CD4-positive, alpha-beta T cell (primary cell): ENCODE measurements at regions of chr10 and their contacts with region 1.

Region 1: GRCh38 chr10:73167783-73168464 is at the starts of genes ECD and FAM149B1:
- DNase-seq: peak; percentile 79 to 96 (median 86)
- ATAC-seq: peak; percentile 92
- H3K4me3 ChIP-seq: peak within 1 kb of the TSS; percentile 90
- H3K4me3 Mint-ChIP-seq: peak within 1 kb of the TSS; percentile 94
- H3K27ac ChIP-seq: peak within 1 kb of the TSS; percentile 96 to 97
- H3K27ac Mint-ChIP-seq: peak within 1 kb of the TSS; percentile 98
- H3K4me1 ChIP-seq: peaks cover 13% of the 10 kb centered on the region
- H3K4me1 Mint-ChIP-seq: peaks cover 45% of the 10 kb centered on the region
- H3K27me3 ChIP-seq: no peaks in the 10 kb centered on the region
- H3K27me3 Mint-ChIP-seq: no peaks in the 10 kb centered on the region
- CTCF ChIP-seq: no peak
- total RNA-seq, gene ECD: 50.5 to 57.7 TPM
- total RNA-seq, gene FAM149B1: 7.0 to 7.7 TPM

Region 2: GRCh38 chr10:72206511-72207229 is 961.3 kb before region 1 on chr10:
- CTCF ChIA-PET with region 1: no interaction called
- POLR2A ChIA-PET with region 1: no interaction called
- intact Hi-C with region 1: no loop called
- DNase-seq: no peak
- ATAC-seq: no peak
- H3K4me3 ChIP-seq: no peak overlapping the region
- H3K4me3 Mint-ChIP-seq: no peak overlapping the region
- H3K27ac ChIP-seq: no peak overlapping the region
- H3K27ac Mint-ChIP-seq: no peak overlapping the region
- H3K4me1 ChIP-seq: peaks cover 14% of the 10 kb centered on the region
- H3K4me1 Mint-ChIP-seq: peaks cover 15% of the 10 kb centered on the region
- H3K27me3 ChIP-seq: no peaks in the 10 kb centered on the region
- H3K27me3 Mint-ChIP-seq: no peaks in the 10 kb centered on the region
- CTCF ChIP-seq: no peak

Region 3: GRCh38 chr10:72354478-72355213 is 813.3 kb before region 1 on chr10 and contains the start of gene DNAJB12:
- CTCF ChIA-PET with region 1: no interaction called
- POLR2A ChIA-PET with region 1: no interaction called
- intact Hi-C with region 1: loop called in 1 of 2 experiments (anchors 2 kb)
- DNase-seq: peak; percentile 78 to 96 (median 88)
- ATAC-seq: peak; percentile 86
- H3K4me3 ChIP-seq: peak within 1 kb of the TSS; percentile 95
- H3K4me3 Mint-ChIP-seq: peak within 1 kb of the TSS; percentile 99
- H3K27ac ChIP-seq: peak within 1 kb of the TSS; percentile 95 to 97
- H3K27ac Mint-ChIP-seq: peak within 1 kb of the TSS; percentile 92
- H3K4me1 ChIP-seq: peaks cover 28% of the 10 kb centered on the region
- H3K4me1 Mint-ChIP-seq: peaks cover 47% of the 10 kb centered on the region
- H3K27me3 ChIP-seq: no peaks in the 10 kb centered on the region
- H3K27me3 Mint-ChIP-seq: no peaks in the 10 kb centered on the region
- CTCF ChIP-seq: no peak
- total RNA-seq, gene DNAJB12: 25.2 to 27.0 TPM

Region 4: GRCh38 chr10:72692057-72692910 is 475.6 kb before region 1 on chr10 and contains the start of gene MCU:
- CTCF ChIA-PET with region 1: no interaction called
- POLR2A ChIA-PET with region 1: no interaction called
- intact Hi-C with region 1: loop called in 1 of 2 experiments (anchors 10 kb)
- DNase-seq: peak; percentile 86 to 96 (median 92)
- ATAC-seq: peak; percentile 96
- H3K4me3 ChIP-seq: peak within 1 kb of the TSS; percentile 79
- H3K4me3 Mint-ChIP-seq: peak within 1 kb of the TSS; percentile 91
- H3K27ac ChIP-seq: peak within 1 kb of the TSS in 1 of 2 donors; percentile 24
- H3K27ac Mint-ChIP-seq: peak within 1 kb of the TSS; percentile 41
- H3K4me1 ChIP-seq: peaks cover 10% of the 10 kb centered on the region
- H3K4me1 Mint-ChIP-seq: peaks cover 43% of the 10 kb centered on the region
- H3K27me3 ChIP-seq: no peaks in the 10 kb centered on the region
- H3K27me3 Mint-ChIP-seq: no peaks in the 10 kb centered on the region
- CTCF ChIP-seq: no peak
- total RNA-seq, gene MCU: 10.3 to 12.0 TPM

Region 5: GRCh38 chr10:73190188-73190587 is 22.3 kb after region 1 on chr10:
- CTCF ChIA-PET with region 1: no interaction called
- POLR2A ChIA-PET with region 1: interaction called, 3 read pairs
- intact Hi-C with region 1: loop called in 1 of 2 experiments (anchors 1 kb)
- DNase-seq: no peak
- ATAC-seq: no peak
- H3K4me3 ChIP-seq: no peak overlapping the region
- H3K4me3 Mint-ChIP-seq: no peak overlapping the region
- H3K27ac ChIP-seq: no peak overlapping the region
- H3K27ac Mint-ChIP-seq: no peak overlapping the region
- H3K4me1 ChIP-seq: no peaks in the 10 kb centered on the region
- H3K4me1 Mint-ChIP-seq: no peaks in the 10 kb centered on the region
- H3K27me3 ChIP-seq: no peaks in the 10 kb centered on the region
- H3K27me3 Mint-ChIP-seq: no peaks in the 10 kb centered on the region
- CTCF ChIP-seq: no peak

Region 6: DNA sequence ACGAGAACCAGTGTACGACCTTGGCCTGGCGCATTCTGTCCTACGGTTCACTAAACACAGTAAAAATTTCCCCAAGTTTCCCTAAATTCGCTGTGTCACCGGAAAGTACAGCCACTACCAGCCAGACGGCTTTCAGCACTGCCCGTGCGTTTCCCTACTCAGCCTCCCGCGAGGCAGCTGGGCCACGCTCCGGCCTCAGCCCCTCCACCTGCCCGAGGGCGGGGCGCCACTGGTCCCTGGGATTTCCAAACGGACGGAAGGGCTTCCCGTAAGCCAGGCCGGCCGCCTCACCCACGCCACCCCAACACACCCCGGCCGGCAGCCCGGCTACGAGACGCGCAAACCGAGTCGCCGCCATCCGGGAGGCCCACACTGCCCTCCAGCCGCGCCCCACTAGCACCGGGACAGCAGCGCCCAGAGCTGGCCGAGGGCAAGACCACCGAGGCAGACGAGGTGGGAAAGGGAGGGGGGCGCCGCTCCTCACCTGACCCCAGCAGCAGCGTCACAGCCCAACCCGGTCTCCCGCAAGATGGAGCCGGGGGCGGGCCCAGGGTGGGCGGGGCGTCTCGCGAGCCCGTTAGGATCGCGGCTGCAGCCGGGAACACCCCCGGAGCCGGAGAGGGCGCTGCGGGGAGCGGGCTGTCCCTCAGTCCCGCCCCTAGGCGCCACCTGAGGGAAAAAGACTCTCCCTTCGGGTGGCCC is 245.8 kb after region 1 on chr10 and contains the start of gene ANXA7:
- CTCF ChIA-PET with region 1: no interaction called
- POLR2A ChIA-PET with region 1: interaction called, 3 read pairs
- intact Hi-C with region 1: loop called in 1 of 2 experiments (anchors 5 kb)
- DNase-seq: peak; percentile 83 to 96 (median 92)
- ATAC-seq: peak; percentile 97
- H3K4me3 ChIP-seq: peak within 1 kb of the TSS; percentile 75
- H3K4me3 Mint-ChIP-seq: peak within 1 kb of the TSS; percentile 91
- H3K27ac ChIP-seq: peak within 1 kb of the TSS; percentile 86 to 98
- H3K27ac Mint-ChIP-seq: peak within 1 kb of the TSS; percentile 84
- H3K4me1 ChIP-seq: peaks cover 36% of the 10 kb centered on the region
- H3K4me1 Mint-ChIP-seq: peaks cover 57% of the 10 kb centered on the region
- H3K27me3 ChIP-seq: no peaks in the 10 kb centered on the region
- H3K27me3 Mint-ChIP-seq: no peaks in the 10 kb centered on the region
- CTCF ChIP-seq: peak; percentile 67
- total RNA-seq, gene ANXA7: 77.7 to 79.6 TPM

Region 7: GRCh38 chr10:75111367-75111906 is 1943.5 kb after region 1 on chr10 and contains the start of gene SAMD8:
- CTCF ChIA-PET with region 1: no interaction called
- POLR2A ChIA-PET with region 1: no interaction called
- intact Hi-C with region 1: loop called in 1 of 2 experiments (anchors 5 kb)
- DNase-seq: peak; percentile 90 to 99 (median 94)
- ATAC-seq: peak; percentile 80
- H3K4me3 ChIP-seq: peak within 1 kb of the TSS; percentile 97
- H3K4me3 Mint-ChIP-seq: peak within 1 kb of the TSS; percentile 88
- H3K27ac ChIP-seq: peak within 1 kb of the TSS; percentile 92 to 95
- H3K27ac Mint-ChIP-seq: peak within 1 kb of the TSS; percentile 90
- H3K4me1 ChIP-seq: peaks cover 26% of the 10 kb centered on the region
- H3K4me1 Mint-ChIP-seq: peaks cover 62% of the 10 kb centered on the region
- H3K27me3 ChIP-seq: no peaks in the 10 kb centered on the region
- H3K27me3 Mint-ChIP-seq: no peaks in the 10 kb centered on the region
- CTCF ChIP-seq: no peak
- total RNA-seq, gene SAMD8: 34.1 to 37.4 TPM